Activated B cell treated with CpG ODN at 0.5 μM for 24 hours (primary cell): ENCODE measurements at regions of chr15 and their contacts with region 1.

Region 1: DNA sequence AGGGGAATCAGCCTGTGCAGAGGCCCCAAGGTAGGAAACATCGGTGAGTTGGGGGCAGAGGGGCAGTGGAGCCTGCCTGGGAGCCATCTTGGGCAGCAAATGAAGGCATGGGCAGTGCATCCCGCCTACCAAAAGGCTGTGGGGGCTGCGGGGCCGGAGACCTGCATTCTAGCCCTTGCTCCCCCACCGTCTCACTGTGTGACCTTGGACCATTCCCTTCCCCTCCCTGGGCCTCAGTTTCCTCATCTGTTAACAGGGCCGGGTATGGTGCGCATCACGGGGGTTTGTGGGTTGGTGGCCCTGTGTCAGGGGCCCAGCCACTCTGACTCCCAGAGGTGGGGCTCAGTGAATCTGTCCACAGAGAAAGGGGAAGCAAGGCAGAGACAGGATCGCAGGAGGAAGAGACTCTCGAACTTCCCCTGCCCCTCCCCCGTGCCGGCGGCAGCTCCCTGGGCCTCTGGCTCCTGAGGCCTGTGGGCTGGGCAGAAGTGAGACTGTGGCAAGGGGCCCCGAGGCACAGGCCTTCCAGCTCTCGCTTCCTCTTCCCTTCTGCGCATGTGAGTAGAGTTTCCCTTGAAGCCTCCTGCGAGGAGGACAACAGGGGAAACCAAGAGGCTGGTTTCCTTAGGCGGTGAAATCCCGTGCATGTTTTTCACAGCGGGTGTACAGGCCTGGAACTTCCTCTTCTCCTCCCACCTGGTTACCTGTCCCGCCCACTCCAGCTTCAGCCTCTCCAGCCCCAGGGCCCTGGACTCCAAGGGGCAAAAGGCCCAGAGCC is 42.9 kb downstream of the IDH2 start:
- DNase-seq: peak; percentile 85
- ATAC-seq: peak; percentile 84
- H3K4me3 Mint-ChIP-seq: peak overlapping the region; percentile 70
- H3K27ac Mint-ChIP-seq: peak overlapping the region; percentile 97
- H3K4me1 Mint-ChIP-seq: peaks cover 81% of the 10 kb centered on the region
- H3K27me3 Mint-ChIP-seq: no peaks in the 10 kb centered on the region
- CTCF ChIP-seq: no peak

Region 2: GRCh38 chr15:89971592-89971997 is 87.8 kb before region 1 on chr15:
- CTCF ChIA-PET with region 1: no interaction called
- POLR2A ChIA-PET with region 1: no interaction called
- intact Hi-C with region 1: no loop called
- DNase-seq: peak; percentile 18
- ATAC-seq: peak; percentile 62
- H3K4me3 Mint-ChIP-seq: no peak overlapping the region
- H3K27ac Mint-ChIP-seq: no peak overlapping the region
- H3K4me1 Mint-ChIP-seq: peaks cover 36% of the 10 kb centered on the region
- H3K27me3 Mint-ChIP-seq: no peaks in the 10 kb centered on the region
- CTCF ChIP-seq: no peak

Region 3: DNA sequence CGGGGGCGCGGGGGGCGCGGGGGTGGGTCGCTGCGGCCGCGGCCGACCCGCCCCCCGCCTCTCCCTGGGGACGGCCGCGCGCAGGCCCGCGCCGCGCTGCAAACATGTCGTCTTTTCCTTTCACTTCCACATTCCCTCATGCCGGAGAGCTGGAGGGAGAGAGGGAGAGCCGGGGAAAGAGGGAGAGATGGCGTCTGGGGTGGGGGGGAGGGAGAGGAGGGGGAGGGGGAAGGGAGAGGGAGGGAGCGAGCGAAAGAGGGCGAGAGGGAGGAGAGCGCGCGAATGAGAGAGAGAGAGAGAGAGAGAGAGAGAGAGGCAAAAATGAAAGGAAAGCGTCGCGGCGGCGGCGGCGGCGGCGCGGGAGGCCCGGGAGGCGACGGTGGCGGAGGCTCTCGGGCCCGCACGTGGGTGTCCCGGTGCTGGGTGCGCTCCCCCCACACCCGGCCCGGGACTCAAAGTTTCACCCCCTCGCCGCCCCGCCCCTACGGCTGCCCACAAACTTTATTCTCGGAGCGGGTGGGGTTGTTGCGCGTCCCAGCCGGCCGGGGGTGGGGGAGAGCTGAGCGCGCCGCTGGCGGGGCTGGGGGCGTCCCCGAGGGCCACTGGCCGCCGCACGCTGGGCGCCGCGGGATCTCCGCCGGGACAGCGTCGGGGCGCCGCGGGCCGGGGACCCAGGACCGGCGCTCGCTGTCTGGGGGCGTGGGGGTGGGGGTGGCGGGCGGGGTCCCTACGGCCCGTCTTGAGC is 57.5 kb before region 1 on chr15:
- CTCF ChIA-PET with region 1: interaction called, 3 read pairs
- POLR2A ChIA-PET with region 1: interaction called, 73 read pairs
- intact Hi-C with region 1: loop called (anchors 1 kb)
- DNase-seq: peak; percentile 59
- ATAC-seq: peak; percentile 60
- H3K4me3 Mint-ChIP-seq: peak overlapping the region; percentile 91
- H3K27ac Mint-ChIP-seq: peak overlapping the region; percentile 91
- H3K4me1 Mint-ChIP-seq: peaks cover 41% of the 10 kb centered on the region
- H3K27me3 Mint-ChIP-seq: no peaks in the 10 kb centered on the region
- CTCF ChIP-seq: no peak

Region 4: GRCh38 chr15:90013503-90013937 is 45.9 kb before region 1 on chr15:
- CTCF ChIA-PET with region 1: no interaction called
- POLR2A ChIA-PET with region 1: interaction called, 12 read pairs
- intact Hi-C with region 1: no loop called
- DNase-seq: no peak
- ATAC-seq: peak; percentile 45
- H3K4me3 Mint-ChIP-seq: peak overlapping the region; percentile 48
- H3K27ac Mint-ChIP-seq: peak overlapping the region; percentile 20
- H3K4me1 Mint-ChIP-seq: peaks cover 38% of the 10 kb centered on the region
- H3K27me3 Mint-ChIP-seq: no peaks in the 10 kb centered on the region
- CTCF ChIP-seq: no peak

Region 5: DNA sequence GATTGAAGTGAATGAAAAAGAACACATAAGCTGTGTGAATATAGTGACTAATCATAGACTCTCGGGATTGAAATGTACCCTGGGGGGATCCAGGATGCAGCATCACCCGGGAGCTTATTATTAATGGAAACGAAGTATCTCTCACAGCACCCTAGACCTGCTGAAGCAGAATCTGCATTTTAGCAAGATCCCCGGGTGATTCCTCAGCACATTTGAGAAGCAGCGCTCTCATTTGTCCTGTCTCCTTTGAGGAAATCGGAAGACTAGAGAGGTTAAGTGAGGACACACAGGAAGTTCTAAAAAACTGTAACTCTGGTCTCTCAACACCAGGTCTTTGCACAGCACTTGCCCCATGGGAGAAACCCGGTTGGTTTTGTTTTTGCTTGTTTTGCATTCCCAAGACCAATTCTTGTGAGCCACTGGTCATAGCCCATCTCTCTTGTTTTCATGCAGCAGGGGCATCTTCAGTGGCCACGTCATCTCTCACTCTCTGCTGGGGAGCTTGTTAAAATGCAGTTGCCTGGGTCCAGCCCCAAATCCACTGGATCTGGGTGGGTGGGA is 28.1 kb before region 1 on chr15:
- CTCF ChIA-PET with region 1: no interaction called
- POLR2A ChIA-PET with region 1: interaction called, 21 read pairs
- intact Hi-C with region 1: no loop called
- DNase-seq: no peak
- ATAC-seq: peak; percentile 91
- H3K4me3 Mint-ChIP-seq: peak overlapping the region; percentile 67
- H3K27ac Mint-ChIP-seq: peak overlapping the region; percentile 76
- H3K4me1 Mint-ChIP-seq: peaks cover 58% of the 10 kb centered on the region
- H3K27me3 Mint-ChIP-seq: no peaks in the 10 kb centered on the region
- CTCF ChIP-seq: no peak

Region 6: DNA sequence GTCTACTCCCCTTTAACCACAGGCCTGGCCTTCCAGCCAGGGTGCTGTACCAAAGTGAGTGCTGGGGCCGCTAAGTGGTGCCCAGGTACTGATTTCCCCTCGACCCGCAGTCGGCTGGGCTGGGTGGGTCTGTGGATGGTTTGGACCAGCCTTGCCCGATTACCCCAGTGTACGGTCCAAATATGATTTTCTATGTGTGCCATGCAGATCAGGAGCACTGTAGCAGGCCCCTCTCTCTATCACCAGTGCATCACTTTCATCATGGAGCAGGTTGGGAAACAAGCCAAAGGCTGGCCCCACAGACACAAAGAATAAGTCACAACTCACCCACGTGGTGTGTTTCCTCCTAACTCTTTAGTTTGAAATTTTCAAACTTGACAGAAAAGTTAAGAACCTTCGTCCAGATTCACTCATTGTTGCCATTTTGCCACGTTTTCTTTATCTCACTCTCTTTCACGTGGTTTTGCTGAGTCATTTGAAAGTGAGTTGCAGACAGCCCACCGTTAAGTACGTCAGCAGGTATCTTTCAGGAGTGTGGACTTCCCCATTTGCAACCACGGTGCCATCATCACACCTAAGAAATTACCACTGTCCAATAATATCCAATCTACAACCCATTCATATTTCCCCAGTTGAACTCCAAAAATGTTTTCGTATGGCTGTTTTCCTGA is 21.3 kb before region 1 on chr15:
- CTCF ChIA-PET with region 1: no interaction called
- POLR2A ChIA-PET with region 1: interaction called, 17 read pairs
- intact Hi-C with region 1: loop called (anchors 1 kb)
- DNase-seq: no peak
- ATAC-seq: peak; percentile 88
- H3K4me3 Mint-ChIP-seq: peak overlapping the region; percentile 17
- H3K27ac Mint-ChIP-seq: peak overlapping the region; percentile 71
- H3K4me1 Mint-ChIP-seq: peaks cover 81% of the 10 kb centered on the region
- H3K27me3 Mint-ChIP-seq: no peaks in the 10 kb centered on the region
- CTCF ChIP-seq: no peak

Region 7: DNA sequence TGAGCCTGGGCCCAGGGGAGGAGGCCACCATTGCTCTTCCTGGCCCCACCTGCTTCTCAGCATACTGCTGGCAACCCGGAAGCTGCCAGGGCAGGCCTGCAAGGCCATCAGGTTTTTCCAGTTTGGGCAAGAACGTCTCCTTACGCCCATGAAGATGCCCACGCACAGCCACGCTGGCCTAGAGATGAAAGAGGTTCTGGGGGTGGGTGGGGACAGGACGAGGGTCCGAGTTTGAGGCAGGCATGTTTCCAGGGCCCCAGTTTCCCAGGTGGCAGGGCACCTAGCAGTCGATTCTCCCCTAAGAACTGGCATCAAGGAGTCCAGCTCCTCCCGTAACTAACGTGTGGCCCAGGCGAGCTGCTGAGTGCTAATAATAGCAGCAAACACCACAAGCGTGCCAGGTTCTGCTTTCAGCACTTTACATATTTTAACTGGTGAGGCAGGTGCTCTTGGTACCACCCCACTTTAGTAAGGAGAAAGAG is 12.4 kb before region 1 on chr15:
- CTCF ChIA-PET with region 1: no interaction called
- POLR2A ChIA-PET with region 1: interaction called, 98 read pairs
- intact Hi-C with region 1: loop called (anchors 1 kb)
- DNase-seq: peak; percentile 38
- ATAC-seq: peak; percentile 87
- H3K4me3 Mint-ChIP-seq: peak overlapping the region; percentile 55
- H3K27ac Mint-ChIP-seq: peak overlapping the region; percentile 92
- H3K4me1 Mint-ChIP-seq: peaks cover 62% of the 10 kb centered on the region
- H3K27me3 Mint-ChIP-seq: no peaks in the 10 kb centered on the region
- CTCF ChIP-seq: no peak

Region 8: GRCh38 chr15:90101969-90102890 is 42.8 kb after region 1 on chr15 and contains the start of gene IDH2:
- CTCF ChIA-PET with region 1: no interaction called
- POLR2A ChIA-PET with region 1: no interaction called
- intact Hi-C with region 1: loop called (anchors 2 kb)
- DNase-seq: peak; percentile 78
- ATAC-seq: peak; percentile 88
- H3K4me3 Mint-ChIP-seq: peak within 1 kb of the TSS; percentile 89
- H3K27ac Mint-ChIP-seq: peak within 1 kb of the TSS; percentile 83
- H3K4me1 Mint-ChIP-seq: peaks cover 50% of the 10 kb centered on the region
- H3K27me3 Mint-ChIP-seq: peaks cover 9% of the 10 kb centered on the region
- CTCF ChIP-seq: no peak
- total RNA-seq, gene IDH2: 49.1 and 51.2 TPM in 2 replicates